ENCODE measurements at regions of chr17 and their contacts with region 1.

Region 1: GRCh38 chr17:27430882-27431491 is 25.3 kb upstream of the KSR1 start:
- DNase-seq: peak; percentile 70
- H3K4me3 ChIP-seq: no peak overlapping the region; a peak in 1 of 4 replicates
- H3K27ac ChIP-seq: no peak overlapping the region
- H3K4me1 ChIP-seq: no peaks in the 10 kb centered on the region
- H3K27me3 ChIP-seq: no peaks in the 10 kb centered on the region
- CTCF ChIP-seq: peak; percentile 71
- EP300 ChIP-seq: no peak
- RAD21 ChIP-seq: peak; percentile 71

Region 2: DNA sequence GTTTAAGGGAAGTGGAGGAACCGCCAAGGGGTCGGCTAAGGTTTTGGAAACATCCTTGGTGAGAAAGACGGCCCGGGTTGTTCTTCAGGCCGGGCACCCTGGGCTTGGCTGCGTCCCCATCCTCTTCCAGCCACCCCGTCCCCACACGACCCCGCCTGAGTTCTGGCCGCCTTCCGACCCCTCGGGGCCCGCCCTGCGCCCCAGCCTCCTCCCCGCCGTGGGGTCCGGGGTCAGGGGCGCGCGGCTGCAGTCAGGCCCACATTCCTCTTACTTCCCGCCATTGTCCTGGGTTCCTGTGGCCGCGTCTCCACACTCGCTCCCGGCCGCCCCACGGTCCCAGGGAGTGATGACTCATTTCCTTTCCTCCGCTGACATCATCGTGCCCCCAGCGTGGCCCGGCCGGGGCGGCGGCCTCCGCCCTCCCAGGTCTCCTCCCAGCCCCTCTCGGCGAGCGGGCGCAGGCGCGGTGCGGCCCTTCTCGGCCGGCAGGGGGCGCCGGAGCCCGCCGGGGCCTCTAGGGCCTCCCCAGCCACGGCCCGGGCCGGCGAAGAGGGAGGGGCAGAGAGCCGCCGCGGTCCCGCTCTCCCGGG is 77.4 kb before region 1 on chr17:
- CTCF ChIA-PET with region 1: interaction called, 12 read pairs
- POLR2A ChIA-PET with region 1: no interaction called
- DNase-seq: peak; percentile 99
- H3K4me3 ChIP-seq: peak overlapping the region; percentile 65 to 82
- H3K27ac ChIP-seq: peak overlapping the region; percentile 83 to 88
- H3K4me1 ChIP-seq: peaks cover 0 to 11% of the 10 kb centered on the region in 2 experiments; a peak in 1 of 4 replicates
- H3K27me3 ChIP-seq: no peaks in the 10 kb centered on the region
- CTCF ChIP-seq: peak; percentile 78
- EP300 ChIP-seq: peak in 1 of 2 experiments; percentile 74; a peak in 1 of 4 replicates
- RAD21 ChIP-seq: peak; percentile 77

Region 3: GRCh38 chr17:27413315-27413714 is 17.7 kb before region 1 on chr17:
- CTCF ChIA-PET with region 1: interaction called, 16 read pairs
- POLR2A ChIA-PET with region 1: no interaction called
- DNase-seq: no peak
- H3K4me3 ChIP-seq: no peak overlapping the region
- H3K27ac ChIP-seq: no peak overlapping the region
- H3K4me1 ChIP-seq: peaks cover 0 to 8% of the 10 kb centered on the region in 2 experiments; a peak in 2 of 4 replicates
- H3K27me3 ChIP-seq: no peaks in the 10 kb centered on the region; the same call in 1 of the 2 replicates
- CTCF ChIP-seq: no peak
- EP300 ChIP-seq: no peak
- RAD21 ChIP-seq: no peak

Region 4: GRCh38 chr17:27420226-27420950 is 10.6 kb before region 1 on chr17:
- CTCF ChIA-PET with region 1: interaction called, 19 read pairs
- POLR2A ChIA-PET with region 1: no interaction called
- DNase-seq: no peak
- H3K4me3 ChIP-seq: no peak overlapping the region
- H3K27ac ChIP-seq: no peak overlapping the region
- H3K4me1 ChIP-seq: no peaks in the 10 kb centered on the region; a peak in 1 of 4 replicates
- H3K27me3 ChIP-seq: no peaks in the 10 kb centered on the region
- CTCF ChIP-seq: no peak
- EP300 ChIP-seq: no peak
- RAD21 ChIP-seq: no peak

Region 5: GRCh38 chr17:27442702-27443101 is 11.7 kb after region 1 on chr17:
- CTCF ChIA-PET with region 1: interaction called, 22 read pairs
- POLR2A ChIA-PET with region 1: no interaction called
- DNase-seq: no peak
- H3K4me3 ChIP-seq: no peak overlapping the region
- H3K27ac ChIP-seq: no peak overlapping the region
- H3K4me1 ChIP-seq: peaks cover 0 to 2% of the 10 kb centered on the region in 2 experiments; a peak in 1 of 4 replicates
- H3K27me3 ChIP-seq: no peaks in the 10 kb centered on the region
- CTCF ChIP-seq: no peak
- EP300 ChIP-seq: no peak
- RAD21 ChIP-seq: no peak